ENCODE measurements at regions of chr13 and their contacts with region 1.

Region 1: GRCh38 chr13:39051157-39051556 is 12.9 kb downstream of the NHLRC3 start:
- DNase-seq: no peak
- ATAC-seq: peak; percentile 47
- H3K4me3 Mint-ChIP-seq: no peak overlapping the region
- H3K27ac Mint-ChIP-seq: no peak overlapping the region
- H3K4me1 Mint-ChIP-seq: peaks cover 3% of the 10 kb centered on the region
- H3K27me3 Mint-ChIP-seq: no peaks in the 10 kb centered on the region

Region 2: GRCh38 chr13:39676315-39676876 is 625.2 kb after region 1 on chr13:
- CTCF ChIA-PET with region 1: no interaction called
- POLR2A ChIA-PET with region 1: no interaction called
- intact Hi-C with region 1: loop called (anchors 1 to 5 kb)
- DNase-seq: peak; percentile 17
- ATAC-seq: no peak
- H3K4me3 Mint-ChIP-seq: no peak overlapping the region
- H3K27ac Mint-ChIP-seq: no peak overlapping the region
- H3K4me1 Mint-ChIP-seq: peaks cover 3% of the 10 kb centered on the region
- H3K27me3 Mint-ChIP-seq: no peaks in the 10 kb centered on the region

Region 3: DNA sequence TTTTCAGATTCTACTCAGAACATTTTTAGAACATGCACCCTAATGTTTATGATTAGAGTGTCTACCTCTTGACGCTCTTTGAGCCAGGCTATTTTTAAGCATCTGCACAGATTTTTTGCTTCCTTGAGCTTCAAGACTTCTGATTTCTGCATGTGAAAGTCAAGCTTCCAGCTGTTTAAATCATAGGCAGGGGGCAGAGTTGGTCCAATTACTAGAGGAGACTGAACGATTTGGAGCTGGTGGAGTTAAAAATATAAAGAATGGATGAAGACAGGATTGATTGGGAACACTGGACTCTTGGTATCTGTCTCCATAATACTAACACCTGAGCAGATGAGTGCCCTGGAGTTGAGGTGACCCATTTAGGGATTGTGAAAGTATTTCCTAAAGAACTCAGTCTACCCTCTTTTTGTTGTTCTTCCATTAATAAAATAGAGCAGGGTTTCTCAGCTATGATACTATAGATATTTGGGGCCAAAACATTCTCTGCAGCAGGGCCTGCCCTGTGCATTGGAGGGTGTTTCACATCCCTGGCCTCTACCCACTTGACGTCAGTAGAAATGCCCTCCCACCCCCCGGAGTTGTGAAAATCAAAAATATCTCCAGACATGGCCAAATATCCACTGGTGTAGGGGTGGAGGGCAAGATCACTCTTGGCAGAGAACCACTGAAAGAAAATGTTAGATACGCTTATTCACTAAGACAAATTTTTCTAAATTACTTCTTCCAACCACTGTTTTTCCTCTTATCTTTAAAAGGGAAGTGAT is 764.4 kb after region 1 on chr13:
- CTCF ChIA-PET with region 1: no interaction called
- POLR2A ChIA-PET with region 1: no interaction called
- intact Hi-C with region 1: no loop called
- DNase-seq: no peak
- ATAC-seq: no peak
- H3K4me3 Mint-ChIP-seq: no peak overlapping the region
- H3K27ac Mint-ChIP-seq: no peak overlapping the region
- H3K4me1 Mint-ChIP-seq: no peaks in the 10 kb centered on the region
- H3K27me3 Mint-ChIP-seq: no peaks in the 10 kb centered on the region

Region 4: GRCh38 chr13:40355126-40355724 is 1304.1 kb after region 1 on chr13:
- CTCF ChIA-PET with region 1: no interaction called
- POLR2A ChIA-PET with region 1: no interaction called
- intact Hi-C with region 1: no loop called
- DNase-seq: peak; percentile 28
- ATAC-seq: peak; percentile 68
- H3K4me3 Mint-ChIP-seq: no peak overlapping the region
- H3K27ac Mint-ChIP-seq: no peak overlapping the region
- H3K4me1 Mint-ChIP-seq: peaks cover 16% of the 10 kb centered on the region
- H3K27me3 Mint-ChIP-seq: no peaks in the 10 kb centered on the region

Measured in activated CD4-positive, alpha-beta T cell treated with anti-CD3 and anti-CD28 coated beads for 36 hours (primary cell).